H1 (cell line): ENCODE measurements at regions of chr21 and their contacts with region 1.

Region 1: DNA sequence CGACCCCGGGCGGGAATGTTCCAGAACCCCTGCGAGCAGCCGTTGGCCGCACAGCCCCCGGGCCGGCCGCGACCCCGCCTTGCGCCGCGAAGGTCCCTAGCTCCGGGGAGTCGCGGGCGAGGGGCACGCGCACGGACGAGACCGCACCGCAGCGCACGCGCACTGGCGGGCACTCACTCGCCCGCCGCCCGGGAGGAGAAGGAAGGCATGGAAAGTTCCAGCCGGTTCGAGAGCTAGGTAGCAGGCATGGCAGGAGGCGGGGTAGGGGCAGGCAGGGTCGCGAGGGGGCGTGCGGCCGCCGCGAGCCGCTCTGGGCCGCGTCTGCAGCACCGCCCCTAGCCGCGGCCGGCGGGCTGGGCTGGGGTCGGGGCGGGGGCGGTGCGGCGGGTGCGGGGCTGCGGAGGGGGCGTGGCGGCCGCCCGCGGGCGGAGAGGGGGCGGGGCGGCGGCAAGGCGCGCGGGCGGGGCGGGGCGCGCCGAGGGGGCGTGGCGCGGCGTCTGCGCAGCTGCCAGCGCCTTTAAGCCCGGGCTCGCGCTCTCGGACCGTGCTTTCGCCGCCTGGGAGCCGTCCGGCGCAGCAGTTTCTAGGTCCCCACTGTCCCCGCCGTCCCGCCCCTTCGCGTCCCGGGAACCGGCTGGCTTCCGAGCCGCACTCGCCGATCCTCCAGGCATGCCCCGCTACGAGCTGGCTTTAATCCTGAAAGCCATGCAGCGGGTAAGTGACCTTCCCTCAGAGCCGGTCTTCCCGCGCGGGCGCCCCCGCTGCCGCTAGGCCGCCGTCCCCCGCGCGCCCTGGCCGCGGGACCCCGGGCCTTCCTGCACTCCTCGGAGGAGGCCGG is at the starts of genes MRPS6 and SLC5A3:
- DNase-seq: peak; percentile 67 to 91
- H3K4me3 ChIP-seq: peak within 1 kb of the TSS; percentile 67 to 92 (median 76)
- H3K27ac ChIP-seq: peak within 1 kb of the TSS; percentile 65; the same call in 1 of the 2 replicates
- H3K4me1 ChIP-seq: peaks cover 0 to 11% (median 3%) of the 10 kb centered on the region in 4 experiments; a peak in 6 of 7 replicates
- H3K27me3 ChIP-seq: no peaks in the 10 kb centered on the region; a peak in 2 of 7 replicates
- CTCF ChIP-seq: peak; percentile 37 to 63 (median 53)
- EP300 ChIP-seq: no peak
- POLR2A ChIP-seq: peak; percentile 90 to 95
- RAD21 ChIP-seq: peak; percentile 33 to 56
- total RNA-seq, gene MRPS6: 154 and 156 TPM in 2 replicates
- total RNA-seq, gene SLC5A3: 19.4 TPM in 2 replicates

Region 2: GRCh38 chr21:34046917-34047316 is 26.3 kb before region 1 on chr21:
- CTCF ChIA-PET with region 1: no interaction called
- POLR2A ChIA-PET with region 1: no interaction called
- DNase-seq: no peak
- H3K4me3 ChIP-seq: no peak overlapping the region
- H3K27ac ChIP-seq: no peak overlapping the region
- H3K4me1 ChIP-seq: no peaks in the 10 kb centered on the region
- H3K27me3 ChIP-seq: no peaks in the 10 kb centered on the region
- CTCF ChIP-seq: no peak
- EP300 ChIP-seq: no peak
- POLR2A ChIP-seq: no peak
- RAD21 ChIP-seq: no peak

Region 3: DNA sequence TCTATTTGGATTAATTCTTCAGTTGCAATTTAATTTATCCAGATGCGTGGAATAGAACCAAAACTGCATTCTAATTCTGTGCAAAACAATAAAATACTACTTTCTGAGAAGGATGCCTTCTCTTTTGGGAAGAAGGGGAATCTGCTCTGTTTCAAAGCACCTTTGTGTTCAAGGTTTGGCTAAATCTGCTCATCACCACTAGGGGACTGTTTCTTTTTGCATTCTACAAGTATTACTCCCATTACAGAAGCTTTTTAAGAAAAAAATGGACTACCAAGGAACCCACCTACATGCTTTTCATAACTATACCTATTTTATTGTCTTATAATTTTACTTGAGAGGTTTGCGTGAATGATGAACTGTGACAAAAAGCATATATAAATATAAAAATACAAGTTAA is 18.4 kb after region 1 on chr21:
- CTCF ChIA-PET with region 1: interaction called, 28 read pairs
- POLR2A ChIA-PET with region 1: interaction called, 19 read pairs
- DNase-seq: no peak
- H3K4me3 ChIP-seq: no peak overlapping the region
- H3K27ac ChIP-seq: no peak overlapping the region
- H3K4me1 ChIP-seq: peaks cover 2 to 17% (median 6%) of the 10 kb centered on the region in 4 experiments; a peak in 5 of 7 replicates
- H3K27me3 ChIP-seq: no peaks in the 10 kb centered on the region
- CTCF ChIP-seq: peak in 1 of 3 experiments; percentile 46; a peak in 2 of 4 replicates
- EP300 ChIP-seq: no peak
- POLR2A ChIP-seq: no peak
- RAD21 ChIP-seq: no peak; a peak in 1 of 4 replicates